Mammary epithelial cell (primary cell): ENCODE measurements at regions of chr10 and their contacts with region 1.

Region 1: GRCh38 chr10:33008499-33009243 is 50.6 kb upstream of the ITGB1 start:
- DNase-seq: peak; percentile 83
- H3K4me3 ChIP-seq: no peak overlapping the region
- H3K27ac ChIP-seq: peak overlapping the region; percentile 72
- H3K4me1 ChIP-seq: peaks cover 55% of the 10 kb centered on the region
- H3K27me3 ChIP-seq: no peaks in the 10 kb centered on the region
- CTCF ChIP-seq: peak; percentile 99

Region 2: DNA sequence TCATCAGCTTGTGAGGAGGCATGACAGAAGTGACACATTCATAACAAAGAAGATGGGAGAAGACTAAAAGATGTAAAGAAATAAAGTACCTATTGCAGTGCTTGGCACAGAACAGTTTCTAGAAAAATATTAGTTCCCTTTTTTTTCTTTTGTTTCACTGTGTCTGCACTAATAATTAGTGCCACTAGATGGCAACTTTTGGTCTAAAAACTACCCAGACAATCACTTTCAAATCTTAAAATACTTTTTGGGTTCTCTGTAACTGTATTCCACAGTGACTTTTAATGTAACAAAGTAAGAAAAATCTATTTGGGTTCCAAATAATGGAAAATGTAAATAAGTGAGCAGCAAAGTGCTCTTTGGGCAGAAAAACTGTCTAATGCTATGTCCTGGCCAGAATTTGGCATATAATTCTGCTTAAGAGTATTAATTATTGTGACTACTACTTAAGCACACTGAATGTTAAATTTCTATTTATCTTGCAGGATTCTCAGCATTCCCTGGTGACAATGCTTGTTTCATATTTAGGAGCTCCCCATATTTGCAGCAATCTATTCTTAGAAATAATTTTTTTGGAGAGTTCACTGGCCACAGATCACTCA is 817.7 kb before region 1 on chr10:
- CTCF ChIA-PET with region 1: interaction called, 10 read pairs
- dilution Hi-C with region 1: no loop called
- in situ Hi-C with region 1: no loop called
- intact Hi-C with region 1: no loop called
- DNase-seq: peak; percentile 27
- H3K4me3 ChIP-seq: no peak overlapping the region
- H3K27ac ChIP-seq: no peak overlapping the region
- H3K4me1 ChIP-seq: no peaks in the 10 kb centered on the region
- H3K27me3 ChIP-seq: no peaks in the 10 kb centered on the region
- CTCF ChIP-seq: peak; percentile 65 to 66

Region 3: DNA sequence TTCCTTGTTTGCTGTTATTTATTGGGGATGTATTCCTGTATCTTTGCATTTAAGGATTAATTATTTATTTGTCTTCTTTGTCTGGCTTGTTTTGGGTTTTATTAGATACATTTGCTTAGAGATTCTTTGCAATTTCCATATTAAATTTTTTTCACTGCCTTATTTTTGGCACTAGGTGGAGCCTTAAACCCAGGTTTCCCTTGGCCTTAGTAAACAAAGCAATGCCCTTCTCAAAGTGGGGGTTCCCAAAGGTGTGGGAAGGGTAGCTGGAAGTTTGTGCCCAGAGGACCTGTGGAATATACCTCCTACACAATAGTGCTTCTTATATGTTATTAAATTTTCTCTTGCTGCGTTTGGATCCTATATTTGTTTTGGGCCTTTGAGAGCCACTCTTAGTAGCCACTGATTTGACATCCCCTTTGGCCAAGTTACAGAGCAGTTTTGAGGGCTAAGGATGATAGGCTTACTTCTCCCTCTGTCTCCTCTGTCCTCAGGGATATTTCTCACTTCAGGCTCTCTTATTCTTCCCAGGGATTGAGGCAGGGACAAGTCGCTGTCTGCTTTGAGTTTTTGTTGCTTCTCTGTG is 213.0 kb before region 1 on chr10:
- CTCF ChIA-PET with region 1: interaction called, 3 read pairs
- dilution Hi-C with region 1: no loop called
- in situ Hi-C with region 1: loop called (anchors 5 to 10 kb)
- intact Hi-C with region 1: no loop called
- DNase-seq: peak; percentile 17
- H3K4me3 ChIP-seq: no peak overlapping the region
- H3K27ac ChIP-seq: no peak overlapping the region
- H3K4me1 ChIP-seq: no peaks in the 10 kb centered on the region
- H3K27me3 ChIP-seq: no peaks in the 10 kb centered on the region
- CTCF ChIP-seq: peak; percentile 61 to 71

Region 4: DNA sequence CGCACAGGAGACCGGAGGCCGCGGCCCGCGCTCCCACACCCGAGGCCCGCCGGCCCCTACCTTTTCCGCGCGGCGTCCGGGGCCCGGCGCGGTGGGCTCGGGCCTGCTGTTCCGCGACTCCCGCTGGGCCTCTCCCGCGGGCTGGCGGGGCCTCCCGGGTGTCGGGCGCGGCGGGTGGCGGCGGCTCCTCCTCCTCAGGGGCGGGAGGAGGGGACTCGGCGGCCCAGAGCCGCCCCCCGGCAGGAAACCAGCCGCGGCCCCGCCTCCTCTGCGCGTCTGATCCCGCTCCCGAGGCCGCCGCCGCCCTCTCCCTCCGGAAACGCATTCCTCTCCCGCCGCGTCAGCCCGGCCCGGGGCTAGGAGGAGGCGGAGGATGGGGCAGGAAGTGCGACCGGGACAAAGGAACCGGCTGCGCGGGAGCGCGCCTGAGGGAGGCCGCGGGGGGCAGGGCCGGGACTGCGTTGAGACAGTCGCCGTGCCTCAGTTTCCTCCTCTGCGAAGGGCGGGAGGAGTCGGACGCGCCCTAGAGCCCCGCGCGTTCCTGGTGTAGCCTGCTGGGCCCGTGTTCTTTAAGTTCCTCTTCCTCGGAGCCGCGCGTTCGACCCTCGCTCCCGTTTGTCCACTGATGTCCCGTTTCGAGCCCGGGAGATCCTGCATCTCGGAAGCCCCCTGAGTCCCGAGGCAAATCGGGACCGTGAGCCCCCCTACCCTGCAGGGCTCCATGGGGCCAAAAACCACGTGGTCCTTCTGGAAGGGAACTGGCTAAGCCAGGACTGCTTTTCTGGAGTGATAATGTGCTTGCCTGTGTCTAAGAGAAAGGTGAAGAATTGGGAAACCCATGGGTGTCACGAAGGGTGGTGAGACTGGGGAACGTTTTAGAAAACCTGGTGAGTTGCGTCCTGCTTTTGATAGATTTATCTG is 50.3 kb before region 1 on chr10 and contains the start of gene ITGB1:
- CTCF ChIA-PET with region 1: interaction called, 4 read pairs
- dilution Hi-C with region 1: loop called (anchors 5 kb)
- in situ Hi-C with region 1: loop called (anchors 5 to 10 kb)
- intact Hi-C with region 1: loop called (anchors 1 kb)
- DNase-seq: peak; percentile 97
- H3K4me3 ChIP-seq: peak within 1 kb of the TSS; percentile 91 to 95 (median 95)
- H3K27ac ChIP-seq: peak within 1 kb of the TSS; percentile 97
- H3K4me1 ChIP-seq: peaks cover 40% of the 10 kb centered on the region
- H3K27me3 ChIP-seq: no peaks in the 10 kb centered on the region
- CTCF ChIP-seq: no peak
- total RNA-seq, gene ITGB1: 1,296 to 1,718 TPM

Region 5: GRCh38 chr10:33115738-33116719 is 107.4 kb after region 1 on chr10:
- CTCF ChIA-PET with region 1: no interaction called
- dilution Hi-C with region 1: loop called (anchors 25 kb)
- in situ Hi-C with region 1: no loop called
- intact Hi-C with region 1: no loop called
- DNase-seq: no peak
- H3K4me3 ChIP-seq: no peak overlapping the region
- H3K27ac ChIP-seq: no peak overlapping the region
- H3K4me1 ChIP-seq: peaks cover 32% of the 10 kb centered on the region
- H3K27me3 ChIP-seq: no peaks in the 10 kb centered on the region
- CTCF ChIP-seq: peak; percentile 16 to 47

Region 6: DNA sequence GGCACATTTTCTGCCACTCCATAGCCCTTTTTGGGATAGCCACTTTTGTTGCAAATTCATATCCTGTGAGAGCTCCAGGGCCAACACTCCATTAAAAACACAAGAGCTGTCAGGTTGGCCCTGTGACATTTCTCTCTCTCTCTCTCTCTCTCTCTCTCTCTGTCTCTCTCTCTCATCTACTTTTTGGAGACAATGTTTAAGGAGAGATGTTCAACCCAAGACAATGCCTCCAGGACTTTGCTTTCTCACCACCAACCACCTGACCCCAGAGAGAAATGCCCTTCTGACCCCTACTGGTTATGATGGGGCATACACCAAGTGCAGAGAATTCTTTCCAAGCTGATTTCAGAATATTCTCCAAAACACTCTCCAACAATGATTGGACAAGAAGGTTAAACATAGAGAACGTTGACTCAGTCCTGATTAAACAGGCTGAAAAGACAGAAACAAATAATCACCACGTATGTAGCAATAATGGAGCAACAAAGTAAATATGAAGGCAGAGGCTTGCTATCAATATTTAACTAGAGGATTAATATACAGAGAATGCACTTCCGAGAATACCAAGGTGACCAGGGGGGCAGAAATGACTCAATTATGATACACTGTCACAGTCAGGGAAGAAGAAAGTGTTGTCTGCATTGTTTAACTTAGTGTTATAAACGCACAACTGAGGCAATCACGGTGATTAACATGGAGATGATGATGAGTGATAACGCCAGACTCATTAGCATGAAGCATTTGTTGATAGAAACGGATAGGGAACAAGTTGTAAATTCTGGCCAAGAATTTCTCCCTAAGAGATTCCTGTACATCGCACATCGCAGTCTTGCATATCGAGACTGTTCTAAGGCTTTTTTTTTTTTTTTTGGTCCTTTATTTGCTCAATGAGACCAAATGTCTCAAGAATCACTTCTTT is 147.3 kb after region 1 on chr10:
- CTCF ChIA-PET with region 1: no interaction called
- dilution Hi-C with region 1: no loop called
- in situ Hi-C with region 1: no loop called
- intact Hi-C with region 1: loop called (anchors 1 kb)
- DNase-seq: peak; percentile 75
- H3K4me3 ChIP-seq: no peak overlapping the region
- H3K27ac ChIP-seq: peak overlapping the region; percentile 4
- H3K4me1 ChIP-seq: peaks cover 21% of the 10 kb centered on the region
- H3K27me3 ChIP-seq: no peaks in the 10 kb centered on the region
- CTCF ChIP-seq: peak; percentile 86 to 94

Region 7: DNA sequence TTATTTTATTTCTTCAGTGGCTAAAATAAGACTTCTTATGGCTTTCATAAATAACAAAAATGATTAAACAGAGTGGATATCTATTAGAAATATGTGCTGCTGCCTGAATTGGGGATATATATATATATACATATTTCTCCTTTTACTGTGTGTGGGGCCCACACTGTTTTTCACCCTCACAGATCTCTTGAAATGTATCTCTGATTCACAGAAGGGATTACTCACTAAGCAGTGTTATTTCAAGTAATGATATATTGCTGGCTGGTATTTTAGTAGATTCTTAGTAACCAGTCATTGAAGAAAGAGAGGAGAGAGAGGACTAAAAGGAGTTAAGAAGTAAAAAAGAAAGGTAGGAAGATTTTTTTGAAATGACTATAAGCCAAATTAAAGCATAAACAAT is 634.4 kb after region 1 on chr10:
- CTCF ChIA-PET with region 1: no interaction called
- dilution Hi-C with region 1: no loop called
- in situ Hi-C with region 1: no loop called
- intact Hi-C with region 1: no loop called
- DNase-seq: peak; percentile 63
- H3K4me3 ChIP-seq: no peak overlapping the region
- H3K27ac ChIP-seq: no peak overlapping the region
- H3K4me1 ChIP-seq: no peaks in the 10 kb centered on the region
- H3K27me3 ChIP-seq: no peaks in the 10 kb centered on the region
- CTCF ChIP-seq: no peak